ENCODE measurements at regions of chr20 and their contacts with region 1.

Region 1: DNA sequence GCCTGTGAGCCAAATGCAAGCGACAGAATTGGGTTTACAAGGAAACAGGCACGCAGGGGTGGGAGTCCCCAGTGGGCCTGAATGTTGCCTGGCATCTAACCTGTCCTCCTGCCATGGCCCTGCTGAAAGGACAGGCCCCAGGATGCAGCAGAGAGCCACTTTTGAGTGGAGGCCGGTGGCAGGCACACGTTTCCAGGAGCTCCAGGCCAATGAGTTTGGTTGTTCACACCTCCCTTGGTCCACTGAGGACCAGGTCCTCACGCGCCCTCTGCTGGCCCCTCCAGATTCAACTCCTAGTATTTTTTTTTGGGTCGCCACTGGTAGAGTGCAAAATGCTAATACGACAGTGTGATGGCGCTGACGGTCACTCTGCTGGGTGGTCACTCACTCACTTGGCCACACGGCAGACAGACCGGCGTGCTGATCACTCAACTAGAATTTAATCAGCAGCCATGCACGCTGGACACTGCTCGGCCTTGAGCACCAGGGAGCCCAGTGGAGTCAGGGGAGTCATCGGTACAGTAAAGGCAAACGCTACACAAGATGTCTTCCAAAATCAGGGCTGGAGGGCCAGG is 81.7 kb upstream of the NFATC2 start:
- DNase-seq: peak; percentile 83
- CTCF ChIP-seq: peak; percentile 72

Region 2: DNA sequence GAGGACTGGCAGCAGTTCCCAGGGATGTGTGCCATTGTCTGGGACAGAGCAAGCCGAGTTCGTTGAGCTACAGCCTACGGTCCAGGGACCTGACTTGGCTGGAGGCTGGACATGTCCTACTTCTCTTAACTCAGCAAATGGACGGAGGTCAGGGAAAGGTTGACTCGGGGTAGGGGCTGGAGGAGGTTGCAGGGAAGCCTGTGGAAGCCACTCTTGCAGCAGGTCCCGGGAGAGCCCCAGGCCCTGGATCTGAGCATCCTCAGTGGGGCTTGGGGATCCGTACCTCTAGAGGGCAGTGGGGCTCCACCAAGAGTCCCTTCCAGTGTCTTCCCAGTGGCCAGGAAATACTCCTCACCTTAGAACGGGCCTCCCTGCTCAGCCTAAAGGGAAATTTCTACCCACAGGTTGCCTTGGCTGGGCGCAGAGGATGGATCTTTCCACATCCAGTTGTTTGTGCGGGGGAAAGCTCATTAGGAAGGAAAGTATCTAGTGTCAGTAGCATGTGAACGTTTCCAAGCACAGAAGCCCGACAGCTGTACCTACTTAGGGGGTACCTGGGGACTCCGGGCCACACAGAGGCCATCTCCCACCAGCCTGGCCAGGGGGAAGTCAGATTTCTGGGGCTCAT is 252.0 kb before region 1 on chr20:
- CTCF ChIA-PET with region 1: interaction called, 34 read pairs
- POLR2A ChIA-PET with region 1: no interaction called
- DNase-seq: peak; percentile 84
- CTCF ChIP-seq: peak; percentile 83

Region 3: GRCh38 chr20:51378171-51378929 is 245.9 kb before region 1 on chr20:
- CTCF ChIA-PET with region 1: interaction called, 34 read pairs
- POLR2A ChIA-PET with region 1: no interaction called
- DNase-seq: no peak
- CTCF ChIP-seq: peak; percentile 5

Region 4: GRCh38 chr20:51659491-51660050 is 35.3 kb after region 1 on chr20:
- CTCF ChIA-PET with region 1: no interaction called
- POLR2A ChIA-PET with region 1: no interaction called
- DNase-seq: no peak
- CTCF ChIP-seq: no peak

Measured in GM10248 (cell line).